Calu3 (cell line): ENCODE measurements at regions of chr3 and their contacts with region 1.

Region 1: GRCh38 chr3:89787485-89787884 is 680.1 kb downstream of the EPHA3 start:
- DNase-seq: no peak
- H3K4me3 Mint-ChIP-seq: no peak overlapping the region
- H3K27ac Mint-ChIP-seq: no peak overlapping the region
- H3K4me1 Mint-ChIP-seq: peaks cover 32% of the 10 kb centered on the region
- H3K27me3 Mint-ChIP-seq: no peaks in the 10 kb centered on the region
- CTCF ChIP-seq: no peak

Region 2: GRCh38 chr3:89314454-89315098 is 472.9 kb before region 1 on chr3:
- CTCF ChIA-PET with region 1: no interaction called
- intact Hi-C with region 1: loop called (anchors 5 kb)
- DNase-seq: no peak
- H3K4me3 Mint-ChIP-seq: no peak overlapping the region
- H3K27ac Mint-ChIP-seq: no peak overlapping the region
- H3K4me1 Mint-ChIP-seq: no peaks in the 10 kb centered on the region
- H3K27me3 Mint-ChIP-seq: no peaks in the 10 kb centered on the region
- CTCF ChIP-seq: no peak

Region 3: DNA sequence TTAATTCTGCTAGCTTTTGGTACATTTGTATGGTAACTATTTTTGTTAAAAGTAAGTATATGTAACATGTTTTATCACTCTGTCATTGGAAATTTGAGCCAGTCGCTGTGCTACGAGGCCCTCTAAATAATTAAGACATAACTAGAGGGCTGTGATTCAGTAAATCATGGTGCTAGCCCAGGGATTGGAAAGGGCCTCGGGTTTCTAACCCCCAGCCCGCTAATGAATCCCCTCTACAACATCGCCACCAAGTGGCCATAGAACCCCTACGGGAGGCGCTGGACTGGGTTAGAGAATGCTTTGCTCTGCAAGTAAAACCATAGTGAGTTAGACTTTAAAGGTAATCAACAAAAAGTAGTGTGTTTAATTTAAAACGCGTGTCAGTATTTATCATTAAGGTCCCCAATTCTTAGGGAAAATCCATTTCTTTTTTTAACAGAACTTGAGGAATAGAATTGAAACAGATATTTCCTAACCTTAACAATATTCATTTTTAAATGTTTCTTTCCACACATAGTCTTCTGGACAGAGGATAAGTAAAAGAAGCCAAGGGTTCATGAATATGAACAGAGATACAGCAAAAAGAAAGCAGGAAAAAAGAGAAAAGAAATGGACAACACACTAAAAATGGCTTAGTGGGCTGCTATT is 64.6 kb after region 1 on chr3:
- CTCF ChIA-PET with region 1: no interaction called
- intact Hi-C with region 1: no loop called
- DNase-seq: peak; percentile 78
- H3K4me3 Mint-ChIP-seq: no peak overlapping the region
- H3K27ac Mint-ChIP-seq: no peak overlapping the region
- H3K4me1 Mint-ChIP-seq: no peaks in the 10 kb centered on the region
- H3K27me3 Mint-ChIP-seq: no peaks in the 10 kb centered on the region
- CTCF ChIP-seq: peak; percentile 53

Region 4: GRCh38 chr3:90132197-90132596 is 344.7 kb after region 1 on chr3:
- CTCF ChIA-PET with region 1: no interaction called
- intact Hi-C with region 1: no loop called
- DNase-seq: no peak
- H3K4me3 Mint-ChIP-seq: no peak overlapping the region
- H3K27ac Mint-ChIP-seq: no peak overlapping the region
- H3K4me1 Mint-ChIP-seq: peaks cover 30% of the 10 kb centered on the region
- H3K27me3 Mint-ChIP-seq: no peaks in the 10 kb centered on the region
- CTCF ChIP-seq: no peak